Caco-2 (cell line): ENCODE measurements at regions of chr2 and their contacts with region 1.

Region 1: DNA sequence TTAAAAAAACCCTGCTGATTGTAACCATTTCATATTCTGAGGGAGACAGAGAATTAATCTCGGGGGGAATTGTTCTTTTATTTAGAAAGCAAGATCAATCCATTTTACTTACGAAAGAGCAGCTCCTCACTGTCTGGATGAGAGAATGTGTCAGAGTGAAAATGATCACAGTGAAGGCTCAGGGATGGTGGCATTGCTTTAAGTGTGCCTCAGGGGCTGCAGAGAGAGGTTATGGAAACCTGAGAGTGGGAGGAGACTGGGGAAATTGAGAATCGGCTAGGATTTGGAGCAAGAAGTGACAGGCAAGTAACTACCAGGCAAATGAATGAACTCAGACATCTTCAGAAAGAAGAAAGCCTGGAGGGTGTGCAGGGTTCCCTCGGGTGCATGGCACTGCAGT is 34.2 kb downstream of the MRPL35 start:
- DNase-seq: no peak
- H3K4me3 ChIP-seq: no peak overlapping the region
- H3K4me3 Mint-ChIP-seq: no peak overlapping the region
- H3K27ac Mint-ChIP-seq: peak overlapping the region; percentile 1
- H3K4me1 ChIP-seq: no peaks in the 10 kb centered on the region
- H3K4me1 Mint-ChIP-seq: peaks cover 6% of the 10 kb centered on the region
- H3K27me3 ChIP-seq: no peaks in the 10 kb centered on the region
- H3K27me3 Mint-ChIP-seq: no peaks in the 10 kb centered on the region
- CTCF ChIP-seq: no peak

Region 2: DNA sequence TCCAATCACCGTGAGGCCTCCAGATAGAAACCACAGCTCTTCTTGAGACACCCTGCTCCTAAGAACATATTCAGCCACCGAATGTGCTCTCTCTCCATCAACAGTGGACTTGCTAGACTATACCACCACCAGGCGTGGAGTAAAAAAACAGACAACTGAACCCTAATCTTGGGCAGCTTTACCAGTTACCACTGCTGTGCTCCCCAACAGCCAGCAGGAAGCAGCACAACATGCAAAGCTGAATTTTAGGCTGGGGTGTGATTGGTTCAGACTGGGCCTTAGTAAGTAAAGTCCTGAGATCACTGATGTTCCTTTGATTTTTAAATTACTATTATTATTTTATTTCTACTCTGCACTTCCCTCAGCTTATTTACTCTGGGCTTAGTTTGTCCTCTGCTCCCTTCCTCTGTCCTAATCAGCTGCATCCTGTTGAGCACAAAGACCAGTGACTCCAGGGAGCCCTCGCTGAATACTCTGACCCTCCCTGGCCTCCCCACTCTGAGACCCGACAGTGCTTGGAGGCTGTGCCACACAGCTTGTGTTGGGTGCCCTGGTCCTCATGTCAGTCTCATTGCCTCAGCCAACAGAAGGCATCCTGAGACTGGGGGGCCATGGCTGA is 12.3 kb before region 1 on chr2:
- CTCF ChIA-PET with region 1: no interaction called
- POLR2A ChIA-PET with region 1: no interaction called
- intact Hi-C with region 1: loop called (anchors 1 kb)
- DNase-seq: peak in 1 of 2 experiments; percentile 43
- H3K4me3 ChIP-seq: no peak overlapping the region
- H3K4me3 Mint-ChIP-seq: no peak overlapping the region
- H3K27ac Mint-ChIP-seq: no peak overlapping the region
- H3K4me1 ChIP-seq: peaks cover 9% of the 10 kb centered on the region
- H3K4me1 Mint-ChIP-seq: peaks cover 30% of the 10 kb centered on the region
- H3K27me3 ChIP-seq: no peaks in the 10 kb centered on the region
- H3K27me3 Mint-ChIP-seq: no peaks in the 10 kb centered on the region
- CTCF ChIP-seq: peak; percentile 69 to 71